GM12878 (cell line): ENCODE measurements at regions of chr1 and their contacts with region 1.

Region 1: DNA sequence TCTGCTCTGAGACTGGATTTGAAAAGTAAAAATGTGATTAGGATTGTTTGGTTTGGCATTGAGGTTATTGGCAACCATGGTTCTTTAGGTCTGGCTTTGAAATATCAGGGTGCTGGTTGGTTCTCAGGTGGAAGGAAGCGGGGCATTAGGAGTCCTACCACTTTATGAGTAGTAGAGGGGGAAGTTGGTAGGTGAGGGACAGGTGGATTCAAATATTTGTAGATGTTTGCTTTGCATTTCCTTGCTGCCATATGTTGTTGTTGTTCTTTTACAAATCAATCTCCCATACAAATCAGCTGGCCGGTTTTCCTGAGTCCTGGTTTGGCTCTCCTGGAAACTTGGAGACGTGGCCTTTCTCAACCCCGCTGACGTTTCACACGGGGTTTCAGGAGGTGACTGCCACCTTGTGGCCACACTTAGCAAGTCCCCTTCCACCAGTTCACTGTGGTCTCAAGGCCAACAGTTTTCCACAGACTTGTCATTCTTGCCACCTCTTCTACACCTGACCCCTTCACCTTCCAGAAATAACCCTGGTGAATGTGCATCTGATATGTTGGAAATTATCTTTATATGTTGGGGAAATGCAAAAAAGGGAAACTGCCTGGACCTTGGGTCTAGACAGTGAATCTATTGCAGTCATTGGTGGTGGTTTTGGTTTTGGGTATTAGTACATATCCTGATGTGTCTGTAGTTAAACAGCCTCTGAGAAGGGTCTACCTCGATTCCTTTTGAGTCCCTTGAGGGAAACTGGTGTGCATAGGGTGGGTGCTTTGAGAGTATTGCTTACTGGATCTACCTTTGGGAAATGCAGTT is 127.0 kb upstream of the KIAA0040 start:
- DNase-seq: peak; percentile 37
- ATAC-seq: peak; percentile 95
- H3K4me3 ChIP-seq: no peak overlapping the region
- H3K27ac ChIP-seq: no peak overlapping the region
- H3K4me1 ChIP-seq: no peaks in the 10 kb centered on the region
- H3K27me3 ChIP-seq: no peaks in the 10 kb centered on the region
- CTCF ChIP-seq: peak; percentile 88 to 96 (median 91)
- EP300 ChIP-seq: no peak
- POLR2A ChIP-seq: no peak
- RAD21 ChIP-seq: peak; percentile 94

Region 2: DNA sequence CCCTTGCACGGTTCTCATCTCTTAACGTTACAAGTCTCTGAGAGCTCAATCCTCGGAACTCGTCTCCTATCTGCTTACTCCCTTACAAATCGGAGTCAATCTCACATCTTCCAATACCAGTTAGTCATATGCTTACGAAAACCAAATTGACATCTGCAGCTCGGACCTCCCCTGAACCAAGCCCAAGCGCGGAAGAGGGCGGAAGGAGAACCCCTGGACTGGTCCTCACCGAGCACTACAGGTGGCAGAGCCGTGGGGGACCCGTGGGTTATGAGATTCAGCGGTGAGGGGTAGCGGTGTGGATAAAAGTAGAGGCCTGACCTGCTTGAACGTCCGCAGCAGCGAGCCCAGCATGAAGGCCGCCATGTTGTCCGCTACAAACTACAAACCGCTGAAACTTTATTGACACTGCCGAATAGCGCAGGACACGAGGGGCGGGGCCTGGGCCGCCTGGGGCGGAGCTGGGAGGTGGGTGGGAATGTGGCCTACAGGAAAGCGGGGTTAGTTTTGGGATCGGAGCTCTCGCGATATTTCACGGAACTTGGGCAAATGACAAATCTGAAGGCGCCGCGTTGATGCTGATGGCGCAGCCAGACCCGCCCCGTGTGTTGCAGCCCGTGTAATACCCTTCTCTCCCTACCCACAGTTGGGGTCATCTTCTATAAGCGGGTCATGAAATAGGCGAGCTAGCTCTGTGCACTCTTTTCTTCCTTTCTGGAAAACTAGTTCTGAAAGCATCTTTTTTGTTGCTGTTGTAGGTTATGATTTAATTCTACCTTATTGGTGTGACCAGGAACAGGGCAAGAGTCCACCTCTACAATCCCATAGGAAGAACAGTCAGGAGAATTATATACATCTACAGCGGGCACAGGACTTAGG is 296.3 kb before region 1 on chr1 and contains the start of gene MRPS14:
- CTCF ChIA-PET with region 1: interaction called, 6 read pairs
- POLR2A ChIA-PET with region 1: no interaction called
- RAD21 ChIA-PET with region 1: no interaction called
- SMC1A ChIA-PET with region 1: interaction called, 6 read pairs
- in situ Hi-C with region 1: no loop called
- intact Hi-C with region 1: loop called (anchors 2 kb)
- DNase-seq: peak; percentile 95
- ATAC-seq: peak; percentile 98
- H3K4me3 ChIP-seq: peak within 1 kb of the TSS; percentile 89
- H3K27ac ChIP-seq: peak within 1 kb of the TSS; percentile 90
- H3K4me1 ChIP-seq: no peaks in the 10 kb centered on the region; the same call in 1 of the 2 replicates
- H3K27me3 ChIP-seq: no peaks in the 10 kb centered on the region
- CTCF ChIP-seq: no peak
- EP300 ChIP-seq: no peak
- POLR2A ChIP-seq: peak; percentile 90
- RAD21 ChIP-seq: no peak
- polyA plus RNA-seq, gene MRPS14: 223 to 224 TPM

Region 3: DNA sequence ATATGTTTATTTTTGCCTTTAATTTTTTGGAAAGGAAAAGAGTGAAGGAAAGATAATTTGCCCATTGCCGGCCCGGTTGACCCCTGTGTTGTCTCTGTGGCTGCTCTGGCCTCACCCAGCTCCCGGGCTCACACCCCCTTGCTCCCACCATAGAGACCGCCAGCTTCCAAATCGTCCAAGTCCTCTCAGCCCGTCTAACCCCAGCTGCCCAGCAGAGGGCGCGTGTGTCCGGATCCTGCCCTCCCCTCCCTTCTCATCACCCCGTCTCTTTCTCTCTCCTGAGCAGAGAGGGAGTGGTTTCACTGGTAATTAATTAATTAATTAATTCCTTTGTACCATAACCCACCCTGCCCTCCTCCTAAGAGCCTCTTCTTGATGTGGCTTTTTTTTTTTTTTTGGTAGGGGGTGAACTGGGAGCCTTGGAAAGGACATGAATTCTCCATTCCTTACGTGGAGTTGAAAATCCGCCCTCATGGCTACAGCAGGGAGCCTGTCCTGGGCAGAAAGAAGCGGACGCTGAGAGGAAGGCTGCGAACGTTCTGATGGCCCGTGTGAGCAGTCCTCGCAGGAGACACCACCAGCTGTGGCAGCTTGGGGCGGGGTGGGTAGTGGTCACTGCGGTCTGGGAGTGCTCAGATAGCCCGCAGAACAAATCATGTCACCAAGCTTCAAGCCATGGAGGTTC is 173.0 kb before region 1 on chr1:
- CTCF ChIA-PET with region 1: interaction called, 482 read pairs
- POLR2A ChIA-PET with region 1: interaction called, 3 read pairs
- RAD21 ChIA-PET with region 1: interaction called, 191 read pairs
- SMC1A ChIA-PET with region 1: interaction called, 208 read pairs
- in situ Hi-C with region 1: no loop called
- intact Hi-C with region 1: no loop called
- DNase-seq: no peak
- ATAC-seq: peak; percentile 80
- H3K4me3 ChIP-seq: no peak overlapping the region
- H3K27ac ChIP-seq: no peak overlapping the region
- H3K4me1 ChIP-seq: peaks cover 11% of the 10 kb centered on the region
- H3K27me3 ChIP-seq: peaks cover 0 to 2% of the 10 kb centered on the region in 2 experiments; a peak in 2 of 4 replicates
- CTCF ChIP-seq: peak; percentile 86 to 94 (median 87)
- EP300 ChIP-seq: no peak
- POLR2A ChIP-seq: no peak
- RAD21 ChIP-seq: peak; percentile 60

Region 4: GRCh38 chr1:175174309-175175165 is 145.1 kb before region 1 on chr1:
- CTCF ChIA-PET with region 1: interaction called, 39 read pairs
- POLR2A ChIA-PET with region 1: no interaction called
- RAD21 ChIA-PET with region 1: interaction called, 4 read pairs
- SMC1A ChIA-PET with region 1: interaction called, 11 read pairs
- in situ Hi-C with region 1: no loop called
- intact Hi-C with region 1: no loop called
- DNase-seq: no peak
- ATAC-seq: peak; percentile 87
- H3K4me3 ChIP-seq: no peak overlapping the region; the same call in 1 of the 2 replicates
- H3K27ac ChIP-seq: no peak overlapping the region; the same call in 1 of the 2 replicates
- H3K4me1 ChIP-seq: peaks cover 10% of the 10 kb centered on the region; the same call in 1 of the 2 replicates
- H3K27me3 ChIP-seq: no peaks in the 10 kb centered on the region
- CTCF ChIP-seq: no peak
- EP300 ChIP-seq: no peak; a peak in 1 of 4 replicates
- POLR2A ChIP-seq: no peak
- RAD21 ChIP-seq: no peak

Region 5: GRCh38 chr1:175216444-175216843 is 103.2 kb before region 1 on chr1:
- CTCF ChIA-PET with region 1: interaction called, 3 read pairs
- POLR2A ChIA-PET with region 1: no interaction called
- RAD21 ChIA-PET with region 1: no interaction called
- SMC1A ChIA-PET with region 1: interaction called, 10 read pairs
- in situ Hi-C with region 1: no loop called
- intact Hi-C with region 1: no loop called
- DNase-seq: no peak
- ATAC-seq: no peak
- H3K4me3 ChIP-seq: no peak overlapping the region
- H3K27ac ChIP-seq: no peak overlapping the region
- H3K4me1 ChIP-seq: peaks cover 14% of the 10 kb centered on the region
- H3K27me3 ChIP-seq: no peaks in the 10 kb centered on the region
- CTCF ChIP-seq: no peak
- EP300 ChIP-seq: no peak
- POLR2A ChIP-seq: no peak
- RAD21 ChIP-seq: no peak

Region 6: DNA sequence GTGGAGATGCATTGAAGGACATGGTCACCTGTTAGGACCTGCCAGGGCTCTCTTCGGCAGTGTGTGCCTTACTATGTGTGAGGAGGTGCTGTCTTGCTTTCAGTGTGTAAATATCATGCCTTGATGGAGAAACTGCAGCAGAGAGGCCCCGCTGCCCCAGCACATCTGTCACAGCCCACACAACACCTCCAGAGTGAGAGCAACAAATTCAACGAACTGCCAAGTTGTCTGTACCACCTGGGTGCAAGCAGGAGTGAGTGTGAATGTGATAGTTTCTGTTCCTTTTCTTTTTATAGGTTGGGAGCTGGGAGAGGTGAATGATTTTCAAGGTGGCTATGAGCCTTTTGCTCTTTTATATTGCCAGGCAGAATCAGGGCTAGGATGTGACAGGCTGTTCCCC is 12.5 kb before region 1 on chr1:
- CTCF ChIA-PET with region 1: interaction called, 38 read pairs
- POLR2A ChIA-PET with region 1: interaction called, 3 read pairs
- RAD21 ChIA-PET with region 1: interaction called, 10 read pairs
- SMC1A ChIA-PET with region 1: interaction called, 14 read pairs
- in situ Hi-C with region 1: no loop called
- intact Hi-C with region 1: no loop called
- DNase-seq: no peak
- ATAC-seq: peak; percentile 88
- H3K4me3 ChIP-seq: no peak overlapping the region
- H3K27ac ChIP-seq: no peak overlapping the region
- H3K4me1 ChIP-seq: peaks cover 6% of the 10 kb centered on the region
- H3K27me3 ChIP-seq: no peaks in the 10 kb centered on the region
- CTCF ChIP-seq: no peak
- EP300 ChIP-seq: peak; percentile 70 to 88; a peak in 2 of 4 replicates
- POLR2A ChIP-seq: no peak
- RAD21 ChIP-seq: no peak